PC-3 (cell line): ENCODE measurements at regions of chr3 and their contacts with region 1.

Region 1: DNA sequence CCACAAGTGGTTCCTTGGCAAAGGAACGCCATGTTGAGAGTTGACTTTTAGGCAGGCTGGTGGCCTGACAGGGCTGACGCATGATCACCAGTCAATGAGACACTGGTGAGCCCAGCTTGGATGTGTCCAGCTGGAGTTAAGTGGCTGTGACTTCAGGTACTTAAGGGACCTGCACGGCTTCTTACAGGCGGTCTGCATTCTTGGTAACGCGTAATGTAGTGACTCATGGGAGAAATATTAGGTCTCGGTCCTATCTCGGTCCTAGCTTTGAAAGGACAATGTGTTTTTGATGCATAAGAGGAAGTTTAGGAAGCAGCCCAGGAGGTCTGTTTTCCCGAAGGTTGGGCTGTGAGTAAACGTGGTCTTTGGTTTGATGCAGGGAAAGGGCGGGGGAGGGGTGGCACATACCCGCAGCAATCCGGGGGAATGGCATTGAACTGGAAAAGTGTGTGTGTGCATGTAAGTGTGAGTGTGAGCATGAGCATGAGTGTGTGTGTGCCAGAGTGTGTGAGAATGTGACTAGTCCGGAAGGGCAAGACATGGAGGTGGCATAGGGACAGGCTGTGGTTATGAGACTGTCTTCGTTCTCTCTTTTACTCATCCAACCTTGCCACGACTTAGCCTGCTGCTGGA is 55.3 kb downstream of the FAM43A start:
- DNase-seq: peak; percentile 96
- ATAC-seq: peak; percentile 78
- H3K4me3 ChIP-seq: peak overlapping the region; percentile 35; the same call in 1 of the 2 replicates
- H3K27ac ChIP-seq: peak overlapping the region; percentile 82
- H3K4me1 ChIP-seq: peaks cover 46% of the 10 kb centered on the region
- H3K27me3 ChIP-seq: no peaks in the 10 kb centered on the region
- CTCF ChIP-seq: no peak

Region 2: DNA sequence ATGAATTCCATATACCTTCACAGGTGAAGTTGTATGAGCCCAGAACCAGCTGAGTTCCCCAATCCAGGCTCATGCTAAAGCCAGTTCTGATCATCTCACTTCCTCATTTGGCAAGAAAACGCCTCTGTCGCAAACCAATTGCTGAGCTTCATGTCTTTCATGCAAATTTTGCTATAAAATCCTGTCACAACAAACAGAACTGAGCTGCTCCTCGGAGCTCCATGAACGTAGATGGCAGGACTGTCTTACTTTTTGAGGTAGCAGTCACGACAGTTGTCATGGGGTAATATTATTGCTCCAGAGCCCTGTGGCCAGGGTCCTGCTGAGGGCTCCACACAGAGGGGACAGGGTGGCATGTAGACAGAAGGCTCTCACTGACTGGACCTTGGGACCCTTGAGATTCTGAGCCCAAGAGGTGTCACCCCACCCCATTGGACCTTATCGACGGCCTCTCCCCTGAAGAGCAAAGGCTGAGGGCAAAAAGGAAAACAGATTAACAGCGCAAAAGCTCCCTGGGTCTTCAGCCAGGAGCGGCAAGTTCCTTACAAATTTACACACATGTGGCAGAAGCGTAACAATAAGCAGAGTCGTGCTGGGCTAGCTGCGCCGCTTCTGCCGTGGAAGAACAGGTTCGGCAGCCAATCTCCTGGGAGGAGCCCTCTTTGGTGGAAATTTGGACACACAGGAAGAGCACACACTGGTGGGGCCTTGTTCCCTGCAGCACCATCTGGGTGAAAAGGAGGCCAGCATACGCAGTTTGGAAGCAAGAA is 898.8 kb before region 1 on chr3:
- CTCF ChIA-PET with region 1: no interaction called
- POLR2A ChIA-PET with region 1: no interaction called
- intact Hi-C with region 1: no loop called
- DNase-seq: no peak
- ATAC-seq: no peak
- H3K4me3 ChIP-seq: no peak overlapping the region
- H3K27ac ChIP-seq: no peak overlapping the region
- H3K4me1 ChIP-seq: peaks cover 38% of the 10 kb centered on the region
- H3K27me3 ChIP-seq: no peaks in the 10 kb centered on the region
- CTCF ChIP-seq: no peak

Region 3: DNA sequence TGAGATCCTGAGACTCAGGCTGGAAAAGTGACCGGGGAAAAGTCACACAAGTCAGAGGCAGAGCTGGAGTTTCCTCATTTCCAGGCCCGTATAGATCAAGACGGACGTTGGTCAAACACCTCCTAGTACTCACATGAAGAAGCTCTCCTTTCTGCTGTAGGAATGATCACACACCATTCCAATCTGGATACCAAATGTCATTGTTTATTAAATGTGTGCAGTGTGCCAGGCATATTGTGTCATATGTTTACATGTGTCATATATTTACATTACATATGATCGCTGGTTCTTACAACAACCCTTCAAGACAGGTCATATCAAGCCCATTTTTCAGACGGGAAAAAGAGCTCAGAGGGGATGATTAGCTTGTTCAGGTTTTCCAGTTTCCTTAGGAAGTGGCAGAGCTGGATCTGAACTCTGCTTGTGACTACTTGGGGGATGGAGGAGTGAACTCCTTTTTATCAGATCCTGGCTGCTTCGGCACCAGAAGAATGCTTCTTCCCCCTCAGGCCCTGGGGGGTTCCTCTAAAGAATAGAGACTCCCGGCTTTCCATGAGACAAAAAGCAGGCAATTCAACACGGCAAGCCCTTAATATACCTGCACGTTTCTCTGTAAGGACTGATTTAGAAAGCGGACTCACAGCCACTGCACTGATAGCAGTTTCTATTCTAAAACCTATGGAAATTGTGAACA is 13.4 kb before region 1 on chr3:
- CTCF ChIA-PET with region 1: no interaction called
- POLR2A ChIA-PET with region 1: interaction called, 3 read pairs
- intact Hi-C with region 1: loop called (anchors 1 kb)
- DNase-seq: peak; percentile 69
- ATAC-seq: no peak
- H3K4me3 ChIP-seq: no peak overlapping the region
- H3K27ac ChIP-seq: peak overlapping the region; percentile 41
- H3K4me1 ChIP-seq: peaks cover 38% of the 10 kb centered on the region
- H3K27me3 ChIP-seq: no peaks in the 10 kb centered on the region
- CTCF ChIP-seq: no peak

Region 4: DNA sequence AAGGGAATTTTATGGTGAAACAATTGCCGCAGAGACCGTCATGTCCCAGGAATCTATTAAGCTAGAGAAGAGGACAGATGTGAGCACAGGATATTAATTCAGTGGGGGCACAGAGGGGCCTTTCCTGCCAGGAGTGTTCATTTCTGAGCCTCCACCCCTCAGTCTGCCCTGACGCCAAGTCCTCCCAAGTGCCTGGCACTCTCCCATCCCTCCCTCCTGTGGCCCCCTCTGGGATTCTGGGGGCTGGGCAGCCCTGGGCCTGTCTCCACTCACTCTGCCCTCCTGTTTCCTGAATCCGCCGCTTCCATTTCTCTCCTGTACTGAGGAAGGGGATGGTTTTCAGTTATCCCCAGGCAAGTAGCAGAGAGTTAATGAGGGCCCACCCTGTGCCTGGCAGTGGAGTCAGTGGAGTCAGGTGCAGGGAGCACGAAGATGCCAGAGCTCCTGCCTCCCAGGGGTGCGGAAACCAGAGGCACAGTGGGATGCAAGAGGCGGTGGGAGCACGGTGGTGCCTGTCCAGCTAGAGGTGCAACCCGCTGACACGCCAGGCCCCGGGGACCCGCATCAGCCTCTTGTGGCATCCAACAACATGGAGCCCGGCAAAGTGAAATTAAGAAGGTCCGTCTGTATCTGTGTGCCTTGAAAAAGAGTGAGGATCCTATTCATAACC is 317.5 kb after region 1 on chr3:
- CTCF ChIA-PET with region 1: no interaction called
- POLR2A ChIA-PET with region 1: no interaction called
- intact Hi-C with region 1: no loop called
- DNase-seq: no peak
- ATAC-seq: no peak
- H3K4me3 ChIP-seq: no peak overlapping the region
- H3K27ac ChIP-seq: no peak overlapping the region
- H3K4me1 ChIP-seq: 0 out of 2 replicates have a peak, but pooled peaks cover 1% of the 10 kb centered on the region
- H3K27me3 ChIP-seq: no peaks in the 10 kb centered on the region
- CTCF ChIP-seq: no peak